ENCODE measurements at regions of chr18 and their contacts with region 1.

Region 1: DNA sequence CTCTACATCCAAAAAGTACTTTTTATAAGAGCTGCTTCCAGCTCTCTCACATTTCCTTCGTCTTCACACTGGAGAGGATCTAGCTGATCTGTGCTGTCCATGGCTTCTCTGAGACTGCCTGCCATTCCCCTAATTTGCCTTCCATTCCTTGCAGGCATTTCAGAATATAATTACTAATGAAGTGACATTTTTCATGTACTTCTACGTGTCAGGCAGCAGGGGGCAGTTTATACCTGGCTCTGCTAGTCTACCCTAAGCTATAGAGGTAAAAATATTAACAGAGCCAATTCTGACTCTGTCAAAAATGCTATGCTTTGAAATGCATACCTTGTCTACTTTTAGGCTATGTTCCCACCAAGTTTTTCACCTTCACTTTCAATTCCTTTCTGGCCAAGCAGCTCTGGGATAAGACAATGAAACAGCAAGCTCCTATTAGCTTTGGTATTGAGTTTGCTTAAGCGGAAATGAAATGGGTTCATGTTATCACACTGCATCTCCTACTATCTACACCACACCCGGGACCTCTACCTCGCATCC is 81.9 kb downstream of the MEP1B start:
- DNase-seq: no peak
- H3K4me3 ChIP-seq: no peak overlapping the region
- H3K27ac ChIP-seq: no peak overlapping the region
- H3K4me1 ChIP-seq: peaks cover 10% of the 10 kb centered on the region
- H3K27me3 ChIP-seq: no peaks in the 10 kb centered on the region
- CTCF ChIP-seq: peak; percentile 74

Region 2: GRCh38 chr18:32122039-32122438 is 149.7 kb before region 1 on chr18:
- intact Hi-C with region 1: no loop called
- DNase-seq: no peak
- H3K4me3 ChIP-seq: no peak overlapping the region
- H3K27ac ChIP-seq: no peak overlapping the region
- H3K4me1 ChIP-seq: no peaks in the 10 kb centered on the region
- H3K27me3 ChIP-seq: no peaks in the 10 kb centered on the region
- CTCF ChIP-seq: no peak

Region 3: GRCh38 chr18:32167975-32168730 is 103.6 kb before region 1 on chr18:
- intact Hi-C with region 1: loop called (anchors 10 kb)
- DNase-seq: no peak
- H3K4me3 ChIP-seq: no peak overlapping the region
- H3K27ac ChIP-seq: no peak overlapping the region
- H3K4me1 ChIP-seq: no peaks in the 10 kb centered on the region
- H3K27me3 ChIP-seq: no peaks in the 10 kb centered on the region
- CTCF ChIP-seq: no peak

Region 4: DNA sequence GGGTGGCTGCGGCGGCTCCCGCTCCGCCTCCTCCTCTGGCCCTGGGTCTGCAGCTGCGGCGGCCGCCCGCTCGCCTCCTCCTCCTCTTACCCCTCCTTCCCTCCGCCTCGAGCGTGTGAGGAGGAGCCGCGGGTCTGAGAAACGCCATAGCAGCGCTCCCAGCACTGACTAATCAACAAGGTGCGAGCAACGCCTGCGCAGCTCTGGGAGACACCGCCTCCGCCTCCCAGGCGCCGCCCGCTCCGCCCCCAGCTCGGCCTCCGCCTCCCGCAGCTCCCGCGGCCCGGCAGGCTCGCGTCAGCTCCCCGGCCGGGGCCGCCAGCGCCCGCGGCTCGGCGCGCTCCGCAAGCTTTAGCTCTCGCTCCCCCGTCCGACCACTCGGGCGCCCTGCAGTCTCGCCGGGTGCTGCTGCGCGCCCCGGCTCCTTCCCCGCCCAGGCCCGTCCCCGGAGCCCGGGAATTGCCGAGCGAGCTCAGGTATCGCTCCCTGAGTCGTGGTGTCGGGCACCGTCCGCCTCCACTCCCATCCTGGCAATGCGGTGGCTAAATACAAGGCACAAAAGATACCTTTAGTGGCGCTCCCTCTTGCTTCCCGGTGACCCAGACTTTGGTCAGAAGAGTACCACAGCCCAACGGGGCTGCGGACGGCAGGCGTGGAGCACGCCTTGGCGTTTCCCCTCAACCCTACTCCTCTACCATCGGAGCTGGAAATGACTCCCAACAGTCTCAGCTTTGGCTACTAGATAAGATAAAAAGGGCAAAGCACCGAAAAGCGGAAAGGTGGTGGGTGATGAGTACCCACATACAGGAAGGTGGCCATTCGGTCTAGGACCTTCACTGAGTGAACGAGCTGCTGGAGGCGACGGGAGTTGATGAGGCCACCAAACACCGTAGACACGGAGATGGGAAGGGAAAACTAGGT is 199.2 kb after region 1 on chr18 and contains the start of gene GAREM1:
- intact Hi-C with region 1: loop called (anchors 5 kb)
- DNase-seq: peak; percentile 95
- H3K4me3 ChIP-seq: peak within 1 kb of the TSS; percentile 85
- H3K27ac ChIP-seq: peak within 1 kb of the TSS; percentile 88
- H3K4me1 ChIP-seq: peaks cover 46% of the 10 kb centered on the region
- H3K27me3 ChIP-seq: peaks cover 6% of the 10 kb centered on the region
- CTCF ChIP-seq: peak; percentile 87
- total RNA-seq, gene GAREM1: 8.6 TPM

Region 5: GRCh38 chr18:32552421-32553030 is 280.8 kb after region 1 on chr18:
- intact Hi-C with region 1: loop called (anchors 5 kb)
- DNase-seq: no peak
- H3K4me3 ChIP-seq: no peak overlapping the region
- H3K27ac ChIP-seq: no peak overlapping the region
- H3K4me1 ChIP-seq: no peaks in the 10 kb centered on the region
- H3K27me3 ChIP-seq: peaks cover 10% of the 10 kb centered on the region
- CTCF ChIP-seq: peak; percentile 81

Measured in left ventricle myocardium inferior (tissue), 1 donor.